ENCODE measurements at regions of chr4 and their contacts with region 1.

Region 1: DNA sequence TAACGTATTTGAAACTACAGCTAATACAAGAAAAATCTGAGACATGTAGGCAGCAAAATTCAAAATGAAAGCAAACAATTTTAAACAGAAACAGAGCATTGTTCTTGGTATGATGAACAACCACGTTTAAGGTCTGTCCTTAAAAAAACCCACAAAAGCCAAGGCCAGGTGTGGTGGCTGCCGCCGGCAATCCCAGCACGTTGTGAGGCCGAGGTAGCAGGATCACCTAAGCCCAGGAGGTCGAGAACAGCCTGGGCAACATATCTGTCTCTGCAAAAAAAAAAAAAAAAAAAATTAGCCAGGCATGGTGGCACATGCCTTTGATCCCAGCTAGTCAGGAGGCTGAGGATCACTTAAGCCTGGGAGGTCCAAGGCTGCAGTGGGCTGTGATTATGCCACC is 13.7 kb downstream of the RWDD4 start:
- DNase-seq: no peak
- H3K4me3 ChIP-seq: no peak overlapping the region
- H3K4me3 Mint-ChIP-seq: no peak overlapping the region
- H3K27ac ChIP-seq: no peak overlapping the region
- H3K27ac Mint-ChIP-seq: no peak overlapping the region
- H3K4me1 ChIP-seq: no peaks in the 10 kb centered on the region
- H3K4me1 Mint-ChIP-seq: no peaks in the 10 kb centered on the region
- H3K27me3 ChIP-seq: no peaks in the 10 kb centered on the region
- H3K27me3 Mint-ChIP-seq: no peaks in the 10 kb centered on the region
- CTCF ChIP-seq: no peak

Region 2: GRCh38 chr4:183618681-183619080 is 26.6 kb before region 1 on chr4:
- intact Hi-C with region 1: no loop called
- DNase-seq: no peak
- H3K4me3 ChIP-seq: no peak overlapping the region
- H3K4me3 Mint-ChIP-seq: no peak overlapping the region
- H3K27ac ChIP-seq: no peak overlapping the region
- H3K27ac Mint-ChIP-seq: no peak overlapping the region
- H3K4me1 ChIP-seq: peaks cover 19 to 21% of the 10 kb centered on the region in 2 donors
- H3K4me1 Mint-ChIP-seq: peaks cover 17% of the 10 kb centered on the region
- H3K27me3 ChIP-seq: no peaks in the 10 kb centered on the region
- H3K27me3 Mint-ChIP-seq: peaks cover 0 to 9% (median 2%) of the 10 kb centered on the region in 3 donors
- CTCF ChIP-seq: no peak

Region 3: DNA sequence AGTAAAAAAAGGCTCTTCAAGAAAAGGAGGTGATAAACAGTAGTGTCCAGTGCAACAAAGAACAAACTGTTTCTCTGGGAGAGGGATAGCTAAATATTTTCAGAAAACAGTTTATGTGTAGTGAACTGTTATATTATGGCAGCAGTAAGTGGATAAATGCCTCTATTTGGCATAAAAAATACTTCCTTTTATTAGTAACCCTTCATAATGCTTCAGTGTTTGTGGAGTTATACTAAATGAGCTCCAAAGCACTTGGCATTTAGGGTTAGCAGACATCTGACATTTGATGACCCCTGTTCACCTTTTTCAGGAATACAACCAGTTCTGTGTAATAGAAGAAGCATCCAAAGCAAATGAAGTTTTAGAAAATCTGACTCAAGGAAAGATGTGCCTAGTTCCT is 45.7 kb after region 1 on chr4:
- intact Hi-C with region 1: loop called in 1 of 2 experiments (anchors 10 kb)
- DNase-seq: no peak
- H3K4me3 ChIP-seq: no peak overlapping the region
- H3K4me3 Mint-ChIP-seq: no peak overlapping the region
- H3K27ac ChIP-seq: no peak overlapping the region
- H3K27ac Mint-ChIP-seq: no peak overlapping the region
- H3K4me1 ChIP-seq: no peaks in the 10 kb centered on the region
- H3K4me1 Mint-ChIP-seq: no peaks in the 10 kb centered on the region
- H3K27me3 ChIP-seq: no peaks in the 10 kb centered on the region
- H3K27me3 Mint-ChIP-seq: peaks cover 0 to 2% (median 0%) of the 10 kb centered on the region in 3 donors
- CTCF ChIP-seq: no peak

Measured in CD14-positive monocyte (primary cell).